Activated CD4-positive, alpha-beta memory T cell treated with anti-CD3 and anti-CD28 coated beads, Interleukin-2, amount 10 ng/mL, durations not matched to agents 7 days and 5 days (primary cell): ENCODE measurements at regions of chr6 and their contacts with region 1.

Region 1: GRCh38 chr6:41039060-41039998 is at the start of gene UNC5CL:
- DNase-seq: peak; percentile 67
- H3K4me3 Mint-ChIP-seq: no peak within 1 kb of the TSS
- H3K27ac Mint-ChIP-seq: no peak within 1 kb of the TSS
- H3K4me1 Mint-ChIP-seq: peaks cover 7% of the 10 kb centered on the region
- H3K27me3 Mint-ChIP-seq: no peaks in the 10 kb centered on the region
- total RNA-seq, gene UNC5CL: 1.6 to 2.3 TPM

Region 2: GRCh38 chr6:41051873-41052272 is 12.5 kb after region 1 on chr6:
- CTCF ChIA-PET with region 1: interaction called, 36 read pairs
- POLR2A ChIA-PET with region 1: interaction called, 4 read pairs
- DNase-seq: no peak
- H3K4me3 Mint-ChIP-seq: no peak overlapping the region
- H3K27ac Mint-ChIP-seq: peak overlapping the region; percentile 71
- H3K4me1 Mint-ChIP-seq: peaks cover 17% of the 10 kb centered on the region
- H3K27me3 Mint-ChIP-seq: no peaks in the 10 kb centered on the region

Region 3: DNA sequence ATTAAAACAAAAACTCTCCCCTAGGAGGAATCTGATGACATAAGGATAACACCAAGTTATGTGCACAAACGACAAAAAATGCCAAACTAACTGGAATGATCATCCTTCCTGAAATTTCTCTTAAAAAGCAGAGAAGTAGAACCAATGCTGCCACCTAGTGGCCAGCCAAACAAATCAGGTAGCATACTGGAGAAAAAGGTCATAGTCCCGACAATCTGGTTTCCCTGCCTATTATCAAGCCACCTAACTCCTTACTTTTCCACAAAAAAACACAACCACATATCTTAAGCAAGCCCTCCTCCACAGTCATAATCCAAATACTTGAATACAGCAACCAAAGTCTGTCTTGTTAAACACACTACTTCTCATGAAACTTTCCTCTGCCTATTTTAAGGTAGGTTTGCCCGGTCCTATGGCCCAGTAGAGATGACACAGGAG is 27.6 kb after region 1 on chr6:
- CTCF ChIA-PET with region 1: interaction called, 22 read pairs
- POLR2A ChIA-PET with region 1: interaction called, 3 read pairs
- DNase-seq: peak; percentile 67
- H3K4me3 Mint-ChIP-seq: no peak overlapping the region
- H3K27ac Mint-ChIP-seq: peak overlapping the region; percentile 10
- H3K4me1 Mint-ChIP-seq: peaks cover 57% of the 10 kb centered on the region
- H3K27me3 Mint-ChIP-seq: no peaks in the 10 kb centered on the region